IMR-90 (cell line): ENCODE measurements at regions of chr19 and their contacts with region 1.

Region 1: DNA sequence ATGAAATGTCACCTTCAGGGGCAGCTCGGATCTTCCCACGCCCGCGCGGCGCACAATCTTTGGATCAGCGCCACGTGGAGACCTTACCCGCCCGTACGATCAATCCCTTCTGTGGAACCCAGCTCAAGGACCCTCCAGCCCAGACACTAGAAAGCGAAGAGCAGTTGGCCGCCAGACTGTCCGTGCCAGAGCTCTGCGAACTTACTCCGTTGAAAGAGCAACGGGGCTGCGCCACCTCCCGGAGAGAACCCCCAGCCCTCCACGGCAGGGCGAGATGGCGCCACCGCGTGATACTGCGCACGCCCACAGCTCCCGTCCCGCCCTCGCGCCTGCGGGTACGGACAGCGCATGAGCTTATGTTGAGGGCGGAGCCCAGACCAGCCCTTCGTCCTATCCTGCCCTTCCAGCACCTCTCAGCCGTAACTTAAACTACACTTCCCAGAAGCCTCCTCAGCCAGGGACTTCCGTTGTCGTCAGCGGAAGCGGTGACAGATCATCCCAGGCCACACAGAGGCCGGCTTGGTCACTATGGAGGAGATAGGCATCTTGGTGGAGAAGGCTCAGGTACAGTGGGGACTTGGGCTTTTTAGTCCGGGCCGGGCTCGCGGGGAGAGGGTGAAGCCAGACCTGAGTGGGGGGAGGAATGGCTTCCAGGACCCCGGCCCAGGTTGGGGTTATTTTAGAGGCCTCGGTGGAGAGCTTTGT is at the start of gene PSMC4:
- DNase-seq: peak; percentile 99
- ATAC-seq: peak; percentile 99
- H3K4me3 ChIP-seq: peak within 1 kb of the TSS; percentile 62
- H3K27ac ChIP-seq: peak within 1 kb of the TSS; percentile 66
- H3K4me1 ChIP-seq: peaks cover 2% of the 10 kb centered on the region; the same call in 1 of the 2 replicates
- H3K27me3 ChIP-seq: no peaks in the 10 kb centered on the region
- CTCF ChIP-seq: peak; percentile 84
- POLR2A ChIP-seq: peak; percentile 95
- RAD21 ChIP-seq: peak; percentile 71
- total RNA-seq, gene PSMC4: 213 and 216 TPM in 2 replicates

Region 2: DNA sequence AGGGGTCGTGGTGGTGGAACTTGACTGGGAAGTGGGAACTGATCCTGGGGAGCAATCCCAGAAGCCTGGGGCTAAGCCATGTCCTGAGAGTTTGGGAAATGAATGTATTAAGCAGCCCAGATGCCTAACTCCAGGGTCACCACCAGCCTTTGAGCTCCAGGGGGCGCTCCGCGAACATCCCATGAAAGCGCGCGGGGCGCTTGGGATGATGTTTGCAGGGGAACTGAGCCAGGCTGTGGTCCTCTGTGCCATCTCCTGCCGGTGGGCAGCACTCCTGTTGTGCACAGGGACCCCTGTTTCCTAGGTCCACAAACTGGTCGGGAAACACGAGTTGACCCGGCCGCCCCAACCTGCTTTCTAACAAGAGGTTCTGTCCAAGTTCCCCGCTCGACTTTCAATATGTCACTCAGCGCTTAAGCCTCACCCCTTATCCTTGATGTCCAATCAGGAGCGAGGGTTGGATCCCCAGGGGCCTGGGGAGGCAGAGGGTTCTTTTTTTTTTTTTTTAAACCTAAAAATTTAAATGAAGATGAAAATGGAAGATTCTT is 177.8 kb before region 1 on chr19:
- CTCF ChIA-PET with region 1: interaction called, 17 read pairs
- POLR2A ChIA-PET with region 1: no interaction called
- dilution Hi-C with region 1: no loop called
- in situ Hi-C with region 1: loop called (anchors 5 kb)
- intact Hi-C with region 1: loop called (anchors 1 kb)
- DNase-seq: peak; percentile 69
- ATAC-seq: peak; percentile 99
- H3K4me3 ChIP-seq: peak overlapping the region; percentile 69
- H3K27ac ChIP-seq: no peak overlapping the region
- H3K4me1 ChIP-seq: no peaks in the 10 kb centered on the region
- H3K27me3 ChIP-seq: peaks cover 5% of the 10 kb centered on the region
- CTCF ChIP-seq: peak; percentile 91
- POLR2A ChIP-seq: no peak
- RAD21 ChIP-seq: peak; percentile 79